ENCODE measurements at regions of chr12 and their contacts with region 1.

Region 1: GRCh38 chr12:104381731-104382480 is 74.8 kb upstream of the CHST11 start:
- DNase-seq: peak; percentile 87
- H3K4me3 ChIP-seq: no peak overlapping the region
- H3K27ac ChIP-seq: no peak overlapping the region
- H3K4me1 ChIP-seq: peaks cover 9% of the 10 kb centered on the region
- CTCF ChIP-seq: peak; percentile 98

Region 2: DNA sequence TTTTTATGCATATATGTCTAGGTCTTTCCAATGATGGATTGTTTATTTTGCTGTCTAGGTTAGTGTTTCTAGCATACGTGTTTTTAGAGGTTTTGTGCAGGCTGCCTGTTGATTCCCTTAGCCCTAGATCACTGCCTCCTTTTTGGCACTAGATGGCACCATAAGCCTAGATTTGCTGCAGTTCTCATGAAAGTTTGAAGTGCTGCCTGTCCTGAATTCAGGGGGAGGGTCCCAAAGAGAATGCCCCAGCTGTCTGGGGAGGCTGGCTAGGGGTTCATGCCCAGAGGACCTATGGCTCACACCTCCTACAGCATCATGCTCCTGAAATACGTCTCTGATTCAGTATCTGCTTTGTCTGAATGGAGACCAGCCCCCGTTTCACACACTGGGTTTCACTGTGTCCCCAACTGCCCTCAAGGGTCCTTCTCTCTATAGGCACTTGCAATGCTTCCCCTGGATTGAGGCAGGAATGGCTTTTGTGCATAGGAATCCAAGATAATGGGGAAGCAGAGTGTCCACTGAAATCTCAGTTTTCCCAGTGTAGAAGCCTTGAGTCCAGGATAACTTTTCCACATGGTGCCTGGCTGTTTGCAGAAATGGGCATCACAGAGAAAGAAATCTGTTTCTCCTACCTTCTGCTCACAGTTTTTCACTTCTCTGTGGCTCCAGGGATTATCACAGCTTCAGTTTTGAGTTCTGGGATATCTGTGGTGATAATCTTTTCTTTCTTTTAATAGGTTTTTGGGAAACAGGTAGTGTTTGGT is 180.5 kb before region 1 on chr12:
- CTCF ChIA-PET with region 1: interaction called, 3 read pairs
- POLR2A ChIA-PET with region 1: no interaction called
- intact Hi-C with region 1: loop called (anchors 1 kb)
- DNase-seq: peak; percentile 71
- H3K4me3 ChIP-seq: no peak overlapping the region
- H3K27ac ChIP-seq: no peak overlapping the region
- H3K4me1 ChIP-seq: no peaks in the 10 kb centered on the region
- CTCF ChIP-seq: peak; percentile 95

Region 3: DNA sequence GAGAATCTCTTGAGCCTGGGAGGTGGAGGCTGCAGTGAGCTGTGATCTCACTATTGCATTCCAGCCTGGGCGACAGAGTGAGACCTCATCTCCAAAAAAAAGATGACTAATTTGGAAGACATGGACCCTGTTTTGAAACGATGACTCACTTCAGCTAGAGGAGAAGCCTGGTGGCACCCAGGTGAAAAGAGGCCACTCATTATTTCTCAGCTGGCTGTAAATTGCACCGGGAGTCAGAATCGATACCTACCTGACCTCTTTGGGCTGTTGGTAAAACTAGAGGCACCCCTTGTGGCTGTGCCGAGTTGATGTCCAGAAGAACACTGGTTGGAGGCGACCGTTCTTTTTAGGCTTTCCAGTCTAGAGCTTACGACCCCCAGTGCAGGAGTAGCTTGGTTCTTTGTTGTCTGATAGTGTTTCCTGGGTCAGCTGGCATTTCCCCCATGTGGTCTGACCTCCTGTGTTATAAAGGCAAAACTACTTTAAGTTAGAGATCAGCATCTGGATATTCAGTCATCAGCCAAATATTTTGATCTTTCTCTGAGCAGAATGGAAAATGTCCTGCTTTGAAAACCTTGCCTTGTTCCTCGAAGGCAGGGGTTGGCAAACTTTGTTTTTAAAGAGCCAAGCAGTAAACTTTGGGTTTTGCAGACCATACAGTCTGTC is 168.0 kb after region 1 on chr12:
- CTCF ChIA-PET with region 1: no interaction called
- POLR2A ChIA-PET with region 1: no interaction called
- intact Hi-C with region 1: no loop called
- DNase-seq: peak; percentile 12
- H3K4me3 ChIP-seq: no peak overlapping the region
- H3K27ac ChIP-seq: no peak overlapping the region
- H3K4me1 ChIP-seq: peaks cover 35% of the 10 kb centered on the region
- CTCF ChIP-seq: peak; percentile 29; the same call in 1 of the 2 replicates

Region 4: DNA sequence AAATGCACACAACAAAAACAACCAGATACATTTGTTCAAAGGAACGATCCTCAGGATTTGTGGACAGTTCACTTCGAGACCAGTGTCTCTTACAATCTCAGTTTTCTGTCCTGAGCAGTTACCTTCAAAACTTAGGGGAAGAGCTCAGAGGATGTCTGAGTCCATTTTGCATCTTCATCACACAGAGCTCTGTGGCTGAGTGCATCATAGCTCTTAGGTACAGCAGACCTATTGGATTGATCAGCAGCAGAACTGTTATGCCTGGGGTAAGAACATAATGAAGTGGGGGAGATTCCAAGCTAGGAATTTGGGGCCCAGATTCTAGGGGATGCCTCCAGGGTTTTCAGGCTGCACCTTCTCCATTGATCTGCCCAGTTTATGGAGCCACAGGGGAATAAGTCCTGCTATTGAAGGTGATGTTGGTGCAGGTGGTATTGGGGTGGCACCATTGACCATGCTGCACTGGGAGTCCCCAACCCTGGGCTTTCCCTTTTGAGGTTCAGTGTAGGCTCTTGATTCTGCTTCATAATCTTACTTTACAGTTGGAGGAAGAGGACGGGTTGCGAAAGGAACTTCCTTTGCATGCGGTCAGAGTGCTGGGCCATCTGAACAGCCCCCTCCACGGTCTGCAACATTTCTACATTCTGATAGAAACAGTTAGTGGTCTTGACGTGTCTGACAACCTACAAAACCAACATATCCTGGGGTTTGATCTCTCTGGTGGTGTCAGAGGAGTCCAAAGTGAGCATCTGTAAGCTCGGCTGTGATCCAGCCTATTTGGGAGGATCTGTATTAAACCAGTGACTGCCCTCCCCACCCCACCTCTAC is 187.7 kb after region 1 on chr12:
- CTCF ChIA-PET with region 1: no interaction called
- POLR2A ChIA-PET with region 1: no interaction called
- intact Hi-C with region 1: loop called (anchors 10 kb)
- DNase-seq: peak; percentile 39
- H3K4me3 ChIP-seq: peak overlapping the region; percentile 16
- H3K27ac ChIP-seq: peak overlapping the region; percentile 54
- H3K4me1 ChIP-seq: peaks cover 37% of the 10 kb centered on the region
- CTCF ChIP-seq: no peak

Region 5: GRCh38 chr12:104680066-104680465 is 298.2 kb after region 1 on chr12:
- CTCF ChIA-PET with region 1: no interaction called
- POLR2A ChIA-PET with region 1: no interaction called
- intact Hi-C with region 1: loop called (anchors 5 kb)
- DNase-seq: peak; percentile 62
- H3K4me3 ChIP-seq: no peak overlapping the region
- H3K27ac ChIP-seq: no peak overlapping the region
- H3K4me1 ChIP-seq: peaks cover 38% of the 10 kb centered on the region
- CTCF ChIP-seq: peak; percentile 75

Region 6: DNA sequence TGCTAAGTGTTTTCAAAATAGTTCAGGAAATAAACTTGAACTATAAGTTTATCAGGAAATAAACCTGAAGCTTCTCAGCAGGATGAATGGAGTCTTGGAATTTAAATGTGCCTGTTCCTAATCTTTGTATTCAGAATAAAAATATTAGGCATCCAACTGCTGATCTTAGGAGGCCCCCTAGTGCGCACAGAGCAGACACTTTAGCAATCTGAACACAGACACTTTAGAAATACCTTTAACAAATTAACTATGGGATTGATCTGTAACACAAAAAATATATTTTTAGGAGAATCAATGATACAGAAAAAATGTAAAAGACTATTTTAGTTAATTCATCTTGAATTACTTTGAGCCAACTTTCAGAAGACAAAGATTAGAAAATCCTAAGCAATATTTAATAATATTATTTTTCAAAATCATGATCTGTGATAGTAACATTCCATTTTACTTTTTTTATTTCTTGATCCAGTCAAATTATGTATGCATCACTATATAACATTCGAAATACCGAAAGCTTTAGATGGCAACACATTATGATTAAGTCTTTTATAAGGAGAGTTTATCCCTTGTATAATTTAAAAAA is 495.3 kb after region 1 on chr12:
- CTCF ChIA-PET with region 1: no interaction called
- POLR2A ChIA-PET with region 1: no interaction called
- intact Hi-C with region 1: loop called (anchors 1 kb)
- DNase-seq: peak; percentile 44
- H3K4me3 ChIP-seq: no peak overlapping the region
- H3K27ac ChIP-seq: no peak overlapping the region
- H3K4me1 ChIP-seq: no peaks in the 10 kb centered on the region
- CTCF ChIP-seq: peak; percentile 89

Region 7: DNA sequence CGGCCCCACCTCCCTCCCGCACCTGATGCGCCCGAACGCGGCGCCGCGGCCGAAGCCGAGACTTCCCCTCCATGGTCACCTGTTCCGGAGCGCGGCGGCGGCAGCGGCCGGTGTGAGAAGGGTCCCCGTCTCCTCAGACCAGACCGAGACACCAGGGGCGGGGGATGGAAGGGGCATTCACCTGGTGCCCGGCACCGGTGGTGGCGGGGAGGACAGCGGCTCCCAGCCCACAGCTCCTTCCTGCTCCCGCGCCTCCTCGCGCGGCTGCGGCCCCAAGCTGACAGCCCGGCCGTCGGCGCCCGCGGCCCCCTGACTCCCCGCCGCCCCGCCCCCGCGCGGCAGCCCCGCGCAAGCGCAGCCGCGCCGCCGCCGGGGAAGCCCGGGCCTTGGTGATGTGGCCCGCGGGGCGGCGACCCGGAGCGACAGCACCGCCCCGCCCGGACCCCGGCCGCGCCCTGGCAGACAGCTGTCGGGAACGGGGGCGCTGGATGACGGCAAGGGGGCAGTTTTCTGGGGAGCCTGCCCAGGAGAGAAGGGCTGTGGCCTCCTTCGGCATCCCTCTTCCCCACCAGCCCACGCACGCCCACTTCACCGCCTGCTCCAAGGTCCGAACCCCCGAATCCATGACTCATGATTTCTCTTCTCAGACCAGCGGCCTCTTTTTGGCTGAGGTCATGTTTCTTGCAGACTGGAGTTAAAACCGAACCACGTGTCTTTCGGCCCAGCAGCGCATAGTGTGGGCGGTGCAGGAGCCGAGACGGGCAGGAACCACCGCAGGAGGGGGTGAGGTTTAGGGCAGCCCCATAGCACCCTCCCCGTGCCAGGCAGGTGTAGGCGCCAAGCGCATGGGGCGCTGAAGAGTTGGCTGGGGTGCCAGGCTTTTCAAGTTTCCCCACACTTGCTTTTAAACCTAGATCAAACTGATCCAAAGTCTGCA is 576.4 kb after region 1 on chr12 and contains the start of gene SLC41A2:
- CTCF ChIA-PET with region 1: no interaction called
- POLR2A ChIA-PET with region 1: no interaction called
- intact Hi-C with region 1: loop called (anchors 5 kb)
- DNase-seq: peak; percentile 84
- H3K4me3 ChIP-seq: peak within 1 kb of the TSS; percentile 78
- H3K27ac ChIP-seq: peak within 1 kb of the TSS; percentile 22
- H3K4me1 ChIP-seq: peaks cover 22% of the 10 kb centered on the region
- CTCF ChIP-seq: peak; percentile 64
- total RNA-seq, gene SLC41A2: 4.6 and 5.3 TPM in 2 replicates

Region 8: DNA sequence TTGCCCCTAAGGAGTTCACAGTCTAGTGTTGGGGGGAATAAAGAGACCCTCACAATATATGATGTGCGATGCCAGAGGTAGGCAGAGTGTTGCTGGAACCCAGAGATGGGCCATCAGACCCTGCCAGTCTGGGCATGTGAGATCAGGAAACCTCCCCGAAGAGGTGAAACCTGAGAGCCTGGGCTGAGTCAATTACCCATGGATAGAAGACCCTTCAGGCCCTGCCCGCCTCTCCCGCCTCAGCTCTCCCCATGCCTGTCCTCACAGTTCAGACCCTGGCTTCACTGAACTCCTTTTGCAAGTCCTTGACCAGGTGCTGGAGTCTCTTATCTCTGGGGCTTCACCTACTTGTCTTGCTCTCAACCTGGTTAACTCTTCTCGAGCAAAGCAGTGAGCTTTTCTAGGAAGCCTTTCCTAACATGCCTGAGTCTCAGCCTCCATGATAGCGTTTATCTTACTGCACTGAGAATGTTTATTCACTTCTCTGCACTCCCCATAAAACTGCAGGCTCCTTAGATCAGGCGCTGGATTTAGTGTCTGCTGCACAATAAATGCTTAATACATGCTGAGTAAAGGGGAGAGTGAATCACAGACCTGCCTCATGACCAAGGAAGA is 682.8 kb after region 1 on chr12:
- CTCF ChIA-PET with region 1: no interaction called
- POLR2A ChIA-PET with region 1: no interaction called
- intact Hi-C with region 1: no loop called
- DNase-seq: no peak
- H3K4me3 ChIP-seq: no peak overlapping the region
- H3K27ac ChIP-seq: no peak overlapping the region
- H3K4me1 ChIP-seq: peaks cover 3% of the 10 kb centered on the region
- CTCF ChIP-seq: no peak

Measured in OCI-LY7 (cell line).